HepG2 (cell line): ENCODE measurements at regions of chr2 and their contacts with region 1.

Region 1: DNA sequence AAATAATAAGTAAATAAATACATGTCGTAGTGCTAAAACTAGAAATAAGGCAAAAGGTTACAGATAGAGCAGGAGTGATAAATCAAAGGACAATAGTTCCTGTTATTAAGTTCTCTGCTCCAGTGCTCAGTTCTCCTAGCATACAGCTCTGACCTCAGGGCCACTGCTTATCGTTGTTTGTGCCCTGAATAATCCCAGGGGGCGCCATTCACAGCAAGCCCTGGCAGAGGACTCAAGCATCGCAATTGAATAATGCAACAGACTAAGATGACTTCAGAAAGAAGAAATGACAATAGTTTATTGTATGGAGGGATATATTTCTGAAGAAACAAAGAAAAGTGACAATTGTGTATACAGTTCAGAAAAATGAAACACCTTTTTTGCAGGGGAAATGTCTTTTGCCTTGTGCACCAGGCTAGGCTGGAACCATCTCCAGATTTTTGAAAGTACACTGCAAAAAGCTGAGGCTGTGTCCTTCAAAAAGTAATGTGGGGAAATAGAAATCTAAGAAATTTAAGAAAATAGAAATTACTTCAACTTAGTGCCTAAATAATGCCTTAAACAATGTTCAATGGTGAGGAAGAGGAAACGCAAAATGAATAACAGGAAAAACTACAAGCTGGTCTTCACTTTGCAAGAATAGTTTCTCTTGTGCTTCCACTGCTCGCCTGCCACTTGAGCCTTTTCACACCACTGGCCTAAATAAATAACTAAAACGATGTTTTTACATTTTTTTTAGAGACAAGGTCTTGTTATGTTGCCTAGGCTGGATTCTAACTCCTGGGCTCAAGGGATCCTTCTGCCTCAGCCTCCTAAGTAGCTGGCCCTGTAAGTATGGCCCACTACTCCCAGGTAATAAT is 19.0 kb upstream of the CCNYL1 start:
- DNase-seq: peak; percentile 58
- ATAC-seq: peak; percentile 91
- H3K4me3 ChIP-seq: no peak overlapping the region
- H3K27ac ChIP-seq: no peak overlapping the region
- H3K4me1 ChIP-seq: peaks cover 46% of the 10 kb centered on the region
- H3K27me3 ChIP-seq: 0 out of 5 replicates have a peak, but pooled peaks cover 0 to 4% of the 10 kb centered on the region in 2 experiments
- CTCF ChIP-seq: peak; percentile 75
- EP300 ChIP-seq: no peak
- POLR2A ChIP-seq: no peak
- RAD21 ChIP-seq: peak; percentile 63

Region 2: GRCh38 chr2:207734264-207734635 is 41.8 kb after region 1 on chr2:
- CTCF ChIA-PET with region 1: interaction called, 4 read pairs
- POLR2A ChIA-PET with region 1: interaction called, 7 read pairs
- in situ Hi-C with region 1: no loop called
- intact Hi-C with region 1: loop called (anchors 1 kb)
- DNase-seq: peak; percentile 75
- ATAC-seq: peak; percentile 94
- H3K4me3 ChIP-seq: peak overlapping the region; percentile 29 to 50 (median 40); a peak in 4 of 6 replicates
- H3K27ac ChIP-seq: peak overlapping the region; percentile 89
- H3K4me1 ChIP-seq: peaks cover 34% of the 10 kb centered on the region
- H3K27me3 ChIP-seq: no peaks in the 10 kb centered on the region
- CTCF ChIP-seq: peak; percentile 92
- EP300 ChIP-seq: no peak
- POLR2A ChIP-seq: no peak
- RAD21 ChIP-seq: peak; percentile 89